Caco-2 (cell line): ENCODE measurements at regions of chr3 and their contacts with region 1.

Region 1: GRCh38 chr3:114962189-114962588 is 184.9 kb downstream of the ZBTB20 start:
- DNase-seq: no peak
- H3K4me3 ChIP-seq: no peak overlapping the region
- H3K4me3 Mint-ChIP-seq: no peak overlapping the region
- H3K27ac Mint-ChIP-seq: no peak overlapping the region
- H3K4me1 ChIP-seq: no peaks in the 10 kb centered on the region
- H3K4me1 Mint-ChIP-seq: no peaks in the 10 kb centered on the region
- H3K27me3 ChIP-seq: no peaks in the 10 kb centered on the region
- H3K27me3 Mint-ChIP-seq: peaks cover 4% of the 10 kb centered on the region
- CTCF ChIP-seq: no peak

Region 2: GRCh38 chr3:114839476-114839875 is 122.7 kb before region 1 on chr3:
- CTCF ChIA-PET with region 1: no interaction called
- POLR2A ChIA-PET with region 1: no interaction called
- intact Hi-C with region 1: loop called (anchors 10 kb)
- DNase-seq: no peak
- H3K4me3 ChIP-seq: no peak overlapping the region
- H3K4me3 Mint-ChIP-seq: no peak overlapping the region
- H3K27ac Mint-ChIP-seq: no peak overlapping the region
- H3K4me1 ChIP-seq: peaks cover 6% of the 10 kb centered on the region; the same call in 1 of the 2 replicates
- H3K4me1 Mint-ChIP-seq: peaks cover 20% of the 10 kb centered on the region
- H3K27me3 ChIP-seq: no peaks in the 10 kb centered on the region
- H3K27me3 Mint-ChIP-seq: peaks cover 4% of the 10 kb centered on the region
- CTCF ChIP-seq: no peak

Region 3: GRCh38 chr3:115004201-115005140 is 42.3 kb after region 1 on chr3:
- CTCF ChIA-PET with region 1: no interaction called
- POLR2A ChIA-PET with region 1: no interaction called
- intact Hi-C with region 1: no loop called
- DNase-seq: no peak
- H3K4me3 ChIP-seq: no peak overlapping the region
- H3K4me3 Mint-ChIP-seq: no peak overlapping the region
- H3K27ac Mint-ChIP-seq: no peak overlapping the region
- H3K4me1 ChIP-seq: no peaks in the 10 kb centered on the region
- H3K4me1 Mint-ChIP-seq: no peaks in the 10 kb centered on the region
- H3K27me3 ChIP-seq: no peaks in the 10 kb centered on the region
- H3K27me3 Mint-ChIP-seq: peaks cover 6% of the 10 kb centered on the region
- CTCF ChIP-seq: no peak

Region 4: DNA sequence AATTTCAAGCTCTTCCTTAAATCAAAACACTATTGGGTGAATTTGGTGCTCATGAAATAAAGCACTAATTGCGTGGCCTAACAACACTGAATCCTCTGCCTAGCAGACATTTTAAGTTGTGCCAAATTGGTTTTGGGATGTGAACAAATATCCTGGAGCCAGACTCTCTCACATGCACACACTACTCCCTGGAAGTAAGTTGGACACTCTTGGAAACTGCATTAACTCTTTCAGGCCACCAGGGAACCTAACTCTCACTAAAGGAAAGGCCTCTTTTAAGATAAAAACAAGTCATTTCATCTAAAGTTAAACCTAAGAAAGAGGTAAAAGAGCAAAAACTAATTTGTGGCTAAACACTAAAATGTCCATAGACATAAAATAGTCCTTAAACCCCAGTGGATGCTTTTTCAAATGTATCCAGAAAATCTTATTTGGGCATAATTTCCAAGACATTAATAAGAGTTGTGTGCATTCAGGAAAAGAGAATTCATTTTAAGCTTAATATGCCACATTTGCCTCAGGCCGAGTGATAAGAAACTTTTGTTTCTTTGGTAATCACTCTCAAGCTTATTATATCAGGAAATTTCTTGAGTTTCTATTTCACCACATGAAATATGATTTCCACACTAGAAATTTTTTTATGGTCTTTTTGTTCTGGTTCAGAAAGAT is 123.1 kb after region 1 on chr3:
- CTCF ChIA-PET with region 1: no interaction called
- POLR2A ChIA-PET with region 1: no interaction called
- intact Hi-C with region 1: no loop called
- DNase-seq: no peak
- H3K4me3 ChIP-seq: no peak overlapping the region
- H3K4me3 Mint-ChIP-seq: no peak overlapping the region
- H3K27ac Mint-ChIP-seq: no peak overlapping the region
- H3K4me1 ChIP-seq: no peaks in the 10 kb centered on the region
- H3K4me1 Mint-ChIP-seq: no peaks in the 10 kb centered on the region
- H3K27me3 ChIP-seq: no peaks in the 10 kb centered on the region
- H3K27me3 Mint-ChIP-seq: no peaks in the 10 kb centered on the region
- CTCF ChIP-seq: no peak